PC-9 (cell line): ENCODE measurements at regions of chr2 and their contacts with region 1.

Region 1: GRCh38 chr2:119678998-119679710 is at the start of gene TMEM177:
- DNase-seq: peak; percentile 81 to 92
- H3K4me3 ChIP-seq: peak within 1 kb of the TSS; percentile 87
- H3K27ac ChIP-seq: no peak within 1 kb of the TSS
- H3K4me1 ChIP-seq: peaks cover 10% of the 10 kb centered on the region
- H3K27me3 ChIP-seq: no peaks in the 10 kb centered on the region
- CTCF ChIP-seq: no peak
- total RNA-seq, gene TMEM177: 18.2 and 18.4 TPM in 2 replicates

Region 2: DNA sequence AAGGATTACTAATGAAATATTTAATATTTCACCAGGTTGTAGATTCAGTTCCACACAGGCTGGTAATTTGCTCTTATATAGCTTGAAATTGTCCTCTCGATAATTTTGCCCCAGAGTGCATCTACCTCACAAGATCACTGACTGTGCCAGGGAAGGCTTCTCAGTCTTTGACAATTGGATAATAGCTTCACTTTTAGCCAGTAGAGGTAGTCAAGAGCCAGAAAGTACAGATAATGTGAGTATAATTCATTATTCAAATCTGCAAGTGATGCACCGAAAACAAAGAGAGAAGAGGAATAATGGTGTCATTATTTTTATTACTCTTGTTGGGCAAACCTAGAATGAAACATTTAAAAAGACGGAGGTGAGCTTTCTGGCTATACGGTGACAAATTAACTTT is 1124.5 kb before region 1 on chr2:
- CTCF ChIA-PET with region 1: no interaction called
- POLR2A ChIA-PET with region 1: no interaction called
- intact Hi-C with region 1: no loop called
- DNase-seq: no peak
- H3K4me3 ChIP-seq: no peak overlapping the region
- H3K27ac ChIP-seq: no peak overlapping the region
- H3K4me1 ChIP-seq: no peaks in the 10 kb centered on the region
- H3K27me3 ChIP-seq: no peaks in the 10 kb centered on the region
- CTCF ChIP-seq: peak; percentile 46

Region 3: GRCh38 chr2:119713804-119714490 is 34.8 kb after region 1 on chr2:
- CTCF ChIA-PET with region 1: no interaction called
- POLR2A ChIA-PET with region 1: no interaction called
- intact Hi-C with region 1: no loop called
- DNase-seq: no peak
- H3K4me3 ChIP-seq: no peak overlapping the region
- H3K27ac ChIP-seq: no peak overlapping the region
- H3K4me1 ChIP-seq: peaks cover 4% of the 10 kb centered on the region; the same call in 1 of the 2 replicates
- H3K27me3 ChIP-seq: peaks cover 31% of the 10 kb centered on the region
- CTCF ChIP-seq: no peak

Region 4: GRCh38 chr2:120162716-120163115 is 483.6 kb after region 1 on chr2:
- CTCF ChIA-PET with region 1: no interaction called
- POLR2A ChIA-PET with region 1: interaction called, 38 read pairs
- intact Hi-C with region 1: no loop called
- DNase-seq: no peak
- H3K4me3 ChIP-seq: no peak overlapping the region
- H3K27ac ChIP-seq: no peak overlapping the region
- H3K4me1 ChIP-seq: no peaks in the 10 kb centered on the region
- H3K27me3 ChIP-seq: no peaks in the 10 kb centered on the region
- CTCF ChIP-seq: no peak